Activated CD4-positive, alpha-beta T cell treated with anti-CD3 and anti-CD28 coated beads for 36 hours (primary cell): ENCODE measurements at regions of chr12 and their contacts with region 1.

Region 1: DNA sequence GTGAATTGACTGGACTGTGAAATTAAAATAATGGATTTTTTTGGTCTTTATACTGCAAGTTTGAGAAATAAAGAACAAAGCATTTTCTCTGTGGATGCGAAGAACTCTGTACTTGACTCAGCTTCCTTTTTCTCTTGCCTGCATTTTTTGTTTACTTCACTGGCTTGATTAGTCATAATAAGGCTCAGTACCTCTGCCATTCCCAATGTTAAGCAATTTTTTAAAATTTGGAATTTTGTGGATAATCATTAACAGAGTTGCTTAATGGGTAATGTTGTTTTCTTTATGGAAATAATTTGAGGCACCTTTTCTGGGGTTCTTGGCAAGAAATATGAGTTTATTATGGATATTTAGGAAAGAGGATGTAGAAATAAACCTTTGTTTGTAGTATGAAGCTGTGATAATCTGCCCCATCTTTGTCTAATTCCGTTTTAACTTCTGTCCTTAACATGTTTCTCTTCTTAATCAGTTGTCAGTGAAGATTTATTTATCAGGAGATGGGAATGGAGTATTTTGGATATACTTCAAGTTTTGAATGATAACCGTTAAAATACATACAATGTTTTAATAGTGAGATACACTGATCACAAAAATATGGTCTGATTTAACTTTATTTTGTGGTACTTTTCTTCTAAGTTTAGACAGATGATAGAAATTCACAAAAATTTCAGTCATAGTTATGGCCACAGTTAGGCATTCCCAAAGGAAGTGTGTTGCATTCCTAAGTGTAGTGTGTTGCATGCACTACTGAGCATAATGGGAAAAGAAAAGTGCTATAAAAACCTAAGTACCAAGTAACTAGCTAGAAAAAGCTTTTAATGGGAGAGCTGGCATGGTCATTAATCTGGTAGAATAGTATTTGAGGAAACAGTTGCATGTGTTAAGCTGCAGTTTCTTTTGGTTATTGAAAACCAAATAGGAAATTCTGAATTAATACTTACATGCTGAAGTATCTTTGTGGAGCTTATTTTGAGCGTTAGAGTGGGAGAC is 27.7 kb downstream of the WNK1 start:
- DNase-seq: no peak
- ATAC-seq: peak; percentile 62
- H3K4me3 Mint-ChIP-seq: peak overlapping the region; percentile 64
- H3K27ac Mint-ChIP-seq: peak overlapping the region; percentile 75
- H3K4me1 Mint-ChIP-seq: peaks cover 70% of the 10 kb centered on the region
- H3K27me3 Mint-ChIP-seq: no peaks in the 10 kb centered on the region

Region 2: DNA sequence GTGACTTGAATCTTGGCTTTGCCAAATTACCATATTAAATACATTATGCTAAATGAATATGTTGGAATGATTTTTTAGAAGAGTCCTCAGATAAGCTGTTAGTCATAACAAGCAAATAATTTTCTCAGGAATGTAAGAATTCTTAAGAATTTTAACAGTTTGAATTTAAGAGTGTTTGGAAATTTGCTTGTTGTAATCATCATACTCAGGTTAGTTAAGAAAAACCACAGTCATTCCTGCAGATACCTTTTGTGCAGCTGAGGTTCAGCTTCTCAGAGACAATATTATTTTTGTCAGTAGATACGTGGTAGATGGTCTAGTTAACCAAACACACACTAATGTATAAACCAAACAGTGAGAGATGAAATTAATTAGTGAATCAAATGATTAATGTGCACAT is 18.8 kb before region 1 on chr12:
- CTCF ChIA-PET with region 1: interaction called, 14 read pairs
- POLR2A ChIA-PET with region 1: no interaction called
- intact Hi-C with region 1: no loop called
- DNase-seq: no peak
- ATAC-seq: no peak
- H3K4me3 Mint-ChIP-seq: no peak overlapping the region
- H3K27ac Mint-ChIP-seq: peak overlapping the region; percentile 61
- H3K4me1 Mint-ChIP-seq: peaks cover 74% of the 10 kb centered on the region
- H3K27me3 Mint-ChIP-seq: no peaks in the 10 kb centered on the region